ENCODE measurements at regions of chr20 and their contacts with region 1.

Region 1: GRCh38 chr20:49905415-49906091 is 9.8 kb downstream of the SPATA2 start:
- DNase-seq: no peak
- H3K4me3 ChIP-seq: no peak overlapping the region
- CTCF ChIP-seq: no peak

Region 2: GRCh38 chr20:49812463-49813304 is 92.9 kb before region 1 on chr20 and contains the start of gene SLC9A8:
- CTCF ChIA-PET with region 1: no interaction called
- POLR2A ChIA-PET with region 1: no interaction called
- DNase-seq: no peak
- H3K4me3 ChIP-seq: peak within 1 kb of the TSS; percentile 80
- CTCF ChIP-seq: peak; percentile 52

Region 3: GRCh38 chr20:49915378-49916145 is 10.0 kb after region 1 on chr20 and contains the start of gene SPATA2:
- CTCF ChIA-PET with region 1: interaction called, 20 read pairs
- POLR2A ChIA-PET with region 1: interaction called, 6 read pairs
- DNase-seq: peak; percentile 60
- H3K4me3 ChIP-seq: peak within 1 kb of the TSS; percentile 96
- CTCF ChIP-seq: no peak